ENCODE measurements at regions of chr2 and their contacts with region 1.

Region 1: GRCh38 chr2:9003616-9004337 is at the start of gene MBOAT2:
- DNase-seq: peak; percentile 84
- H3K4me3 Mint-ChIP-seq: peak within 1 kb of the TSS; percentile 83
- H3K27ac Mint-ChIP-seq: peak within 1 kb of the TSS; percentile 78
- H3K4me1 Mint-ChIP-seq: peaks cover 35% of the 10 kb centered on the region
- H3K27me3 Mint-ChIP-seq: no peaks in the 10 kb centered on the region
- CTCF ChIP-seq: no peak
- total RNA-seq, gene MBOAT2: 30.1 and 34.7 TPM in 2 replicates

Region 2: GRCh38 chr2:8608411-8608954 is 395.3 kb before region 1 on chr2:
- CTCF ChIA-PET with region 1: no interaction called
- POLR2A ChIA-PET with region 1: no interaction called
- intact Hi-C with region 1: no loop called
- DNase-seq: no peak
- H3K4me3 Mint-ChIP-seq: no peak overlapping the region
- H3K27ac Mint-ChIP-seq: no peak overlapping the region
- H3K4me1 Mint-ChIP-seq: no peaks in the 10 kb centered on the region
- H3K27me3 Mint-ChIP-seq: no peaks in the 10 kb centered on the region
- CTCF ChIP-seq: no peak

Region 3: DNA sequence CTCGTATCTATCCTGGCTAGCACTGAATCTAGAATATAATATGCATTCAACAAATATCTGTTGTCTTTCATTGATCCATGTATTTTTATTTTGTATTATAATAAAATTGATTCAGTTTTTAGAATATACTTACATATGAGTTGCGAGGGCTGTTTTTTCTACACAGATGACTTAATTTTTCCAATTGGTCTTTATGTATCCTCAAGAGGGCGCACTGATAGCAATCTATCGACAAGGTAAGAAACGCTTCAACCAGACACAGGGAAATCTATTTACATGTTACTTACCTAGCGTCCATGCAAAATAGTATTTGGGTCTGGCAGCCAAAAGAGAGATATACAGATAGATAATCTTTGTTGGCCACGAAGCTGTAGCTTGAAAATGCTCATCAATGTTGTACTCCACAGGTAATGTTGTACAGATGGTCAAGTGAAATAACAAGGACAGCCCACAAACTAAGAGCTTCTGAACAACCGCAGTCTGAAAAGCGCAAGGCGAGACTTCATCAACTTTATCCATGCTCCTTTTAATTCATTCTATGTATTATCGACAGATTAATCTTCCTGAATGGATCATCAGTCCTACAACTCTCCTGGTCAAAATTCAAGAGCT is 130.8 kb before region 1 on chr2:
- CTCF ChIA-PET with region 1: interaction called, 4 read pairs
- POLR2A ChIA-PET with region 1: no interaction called
- intact Hi-C with region 1: loop called (anchors 5 kb)
- DNase-seq: peak; percentile 61
- H3K4me3 Mint-ChIP-seq: no peak overlapping the region
- H3K27ac Mint-ChIP-seq: no peak overlapping the region
- H3K4me1 Mint-ChIP-seq: no peaks in the 10 kb centered on the region
- H3K27me3 Mint-ChIP-seq: no peaks in the 10 kb centered on the region
- CTCF ChIP-seq: peak; percentile 51

Region 4: DNA sequence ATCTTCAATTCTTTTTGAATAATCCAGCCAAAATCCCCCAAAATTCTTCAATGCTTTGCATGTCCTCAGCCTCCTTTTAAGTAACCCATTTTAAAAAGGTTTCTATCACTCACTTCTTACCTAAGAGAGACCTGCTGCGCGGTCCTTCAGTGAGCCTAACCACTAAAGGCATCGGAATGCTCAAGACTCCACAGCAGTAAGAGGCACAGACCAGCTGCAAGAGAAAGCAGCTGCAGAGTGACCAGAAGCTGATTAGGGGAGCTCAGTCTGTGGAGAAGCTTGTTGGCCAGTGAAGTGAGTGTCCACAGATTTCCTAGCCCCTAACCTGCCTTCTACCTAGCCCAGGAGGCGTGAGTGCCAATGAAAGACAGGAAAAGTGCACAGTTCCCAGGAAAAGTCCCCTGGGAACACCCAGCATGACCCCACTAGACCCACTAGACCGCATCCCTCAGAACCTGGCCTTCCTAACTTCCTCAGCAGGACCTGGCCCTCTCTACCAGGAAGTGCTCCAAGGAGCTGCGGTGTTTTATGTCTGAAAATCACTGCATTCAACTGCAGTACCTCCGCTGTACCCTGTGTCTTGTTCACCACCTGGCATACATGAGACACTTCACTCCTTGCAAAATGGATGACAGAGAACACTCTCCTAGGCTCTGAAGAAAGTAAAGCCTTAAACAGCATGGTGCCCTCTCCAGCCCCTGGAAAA is 10.4 kb before region 1 on chr2:
- CTCF ChIA-PET with region 1: no interaction called
- POLR2A ChIA-PET with region 1: interaction called, 38 read pairs
- intact Hi-C with region 1: no loop called
- DNase-seq: no peak
- H3K4me3 Mint-ChIP-seq: peak overlapping the region; percentile 61
- H3K27ac Mint-ChIP-seq: peak overlapping the region; percentile 84
- H3K4me1 Mint-ChIP-seq: peaks cover 47% of the 10 kb centered on the region
- H3K27me3 Mint-ChIP-seq: no peaks in the 10 kb centered on the region
- CTCF ChIP-seq: no peak

Region 5: DNA sequence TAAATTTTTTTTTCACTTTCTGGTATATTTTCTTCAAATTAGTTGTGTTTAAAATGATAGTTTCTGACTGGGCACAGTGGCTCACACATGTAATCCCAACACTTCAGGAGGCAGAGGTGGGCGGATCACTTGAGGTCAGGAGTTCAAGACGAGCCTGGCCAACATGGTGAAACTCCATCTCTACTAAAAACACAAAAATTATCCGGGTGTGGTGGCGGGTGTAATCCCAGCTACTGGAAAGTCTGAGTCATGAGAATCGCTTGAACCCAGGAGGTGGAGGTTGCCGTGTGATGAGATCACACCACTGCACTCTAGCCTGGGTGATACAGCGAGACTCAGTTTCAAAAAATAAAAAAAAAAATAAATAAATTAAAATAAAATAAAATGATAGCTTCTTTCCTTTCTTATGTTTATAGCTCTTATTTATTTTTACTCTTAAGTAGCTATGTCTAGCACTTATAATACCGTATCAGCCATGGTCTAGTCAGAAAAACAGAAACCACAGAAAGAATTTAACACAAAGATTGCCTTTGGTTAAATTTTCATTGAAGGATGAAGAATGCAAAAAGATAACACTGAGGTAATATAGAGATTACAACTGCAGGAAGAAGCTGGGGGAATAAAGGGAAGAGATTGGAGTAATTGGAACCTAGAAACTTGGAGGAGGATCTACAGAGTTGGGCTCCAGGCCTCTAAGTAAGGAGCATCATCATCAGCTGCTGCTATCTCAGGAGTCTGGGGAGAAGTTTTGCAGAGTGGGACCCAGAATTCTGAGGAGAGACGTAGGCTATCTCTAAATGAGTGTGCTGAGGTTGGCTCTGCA is 54.4 kb after region 1 on chr2:
- CTCF ChIA-PET with region 1: no interaction called
- POLR2A ChIA-PET with region 1: interaction called, 11 read pairs
- intact Hi-C with region 1: no loop called
- DNase-seq: peak; percentile 88
- H3K4me3 Mint-ChIP-seq: no peak overlapping the region
- H3K27ac Mint-ChIP-seq: peak overlapping the region; percentile 57
- H3K4me1 Mint-ChIP-seq: peaks cover 22% of the 10 kb centered on the region
- H3K27me3 Mint-ChIP-seq: no peaks in the 10 kb centered on the region
- CTCF ChIP-seq: no peak

Region 6: GRCh38 chr2:9112079-9112721 is 108.4 kb after region 1 on chr2:
- CTCF ChIA-PET with region 1: interaction called, 5 read pairs
- POLR2A ChIA-PET with region 1: interaction called, 9 read pairs
- intact Hi-C with region 1: loop called (anchors 5 kb)
- DNase-seq: peak; percentile 86
- H3K4me3 Mint-ChIP-seq: peak overlapping the region; percentile 51
- H3K27ac Mint-ChIP-seq: peak overlapping the region; percentile 84
- H3K4me1 Mint-ChIP-seq: peaks cover 26% of the 10 kb centered on the region
- H3K27me3 Mint-ChIP-seq: no peaks in the 10 kb centered on the region
- CTCF ChIP-seq: no peak

Region 7: GRCh38 chr2:9127316-9127715 is 123.5 kb after region 1 on chr2:
- CTCF ChIA-PET with region 1: no interaction called
- POLR2A ChIA-PET with region 1: no interaction called
- intact Hi-C with region 1: no loop called
- DNase-seq: no peak
- H3K4me3 Mint-ChIP-seq: no peak overlapping the region
- H3K27ac Mint-ChIP-seq: no peak overlapping the region
- H3K4me1 Mint-ChIP-seq: no peaks in the 10 kb centered on the region
- H3K27me3 Mint-ChIP-seq: no peaks in the 10 kb centered on the region
- CTCF ChIP-seq: no peak